ENCODE measurements at regions of chr5 and their contacts with region 1.

Region 1: GRCh38 chr5:91383027-91383955 is at the start of gene ARRDC3:
- DNase-seq: peak; percentile 90 to 99 (median 98)
- ATAC-seq: peak; percentile 32 to 46
- H3K4me3 Mint-ChIP-seq: peak within 1 kb of the TSS; percentile 90 to 100 (median 99)
- H3K27ac Mint-ChIP-seq: peak within 1 kb of the TSS; percentile 92 to 100 (median 99)
- H3K4me1 Mint-ChIP-seq: peaks cover 9 to 26% (median 20%) of the 10 kb centered on the region in 4 donors
- H3K27me3 Mint-ChIP-seq: no peaks in the 10 kb centered on the region
- polyA plus RNA-seq, gene ARRDC3: 72.6 to 134 (median 113) TPM

Region 2: GRCh38 chr5:90474235-90475109 is 908.8 kb before region 1 on chr5 and contains the starts of genes MBLAC2 and POLR3G:
- POLR2A ChIA-PET with region 1: interaction called, 14 read pairs
- DNase-seq: peak; percentile 84 to 96 (median 92)
- ATAC-seq: peak; percentile 84 to 86
- H3K4me3 Mint-ChIP-seq: peak within 1 kb of the TSS; percentile 92 to 99 (median 98)
- H3K27ac Mint-ChIP-seq: peak within 1 kb of the TSS; percentile 94 to 98 (median 96)
- H3K4me1 Mint-ChIP-seq: peaks cover 23 to 39% (median 35%) of the 10 kb centered on the region in 4 donors
- H3K27me3 Mint-ChIP-seq: no peaks in the 10 kb centered on the region
- polyA plus RNA-seq, gene MBLAC2: 4.7 to 5.7 (median 5.3) TPM
- polyA plus RNA-seq, gene POLR3G: 1.9 to 2.8 (median 2.1) TPM

Region 3: DNA sequence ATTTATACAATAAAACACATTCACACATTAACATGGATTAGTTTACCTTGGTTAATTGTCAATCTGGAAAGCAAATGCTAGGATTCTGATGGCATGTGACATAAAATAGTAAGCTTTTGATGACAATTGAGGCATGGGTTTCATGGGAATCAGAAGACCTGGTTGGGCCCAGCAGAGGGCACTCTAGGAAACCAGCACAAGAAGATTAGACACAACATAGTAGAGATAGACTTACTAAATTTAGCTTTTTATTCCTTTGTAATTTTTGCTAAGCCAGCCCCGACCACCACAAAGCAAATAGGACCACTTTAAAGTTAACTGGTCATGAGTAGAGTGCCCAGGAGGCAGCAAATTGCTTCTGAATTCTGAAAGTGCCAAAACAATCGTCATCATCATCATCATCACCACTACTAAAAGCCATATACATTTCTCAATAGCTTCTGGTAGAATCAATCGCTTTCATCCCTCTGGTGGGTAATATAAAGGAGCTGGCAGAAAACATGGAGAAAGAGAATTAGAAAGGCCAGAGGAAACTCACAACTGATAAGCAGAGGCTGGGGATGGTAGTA is 163.4 kb before region 1 on chr5:
- POLR2A ChIA-PET with region 1: interaction called, 31 read pairs
- DNase-seq: peak in 5 of 10 donors; percentile 4 to 63 (median 22)
- ATAC-seq: peak; percentile 44 to 46
- H3K4me3 Mint-ChIP-seq: no peak overlapping the region
- H3K27ac Mint-ChIP-seq: no peak overlapping the region
- H3K4me1 Mint-ChIP-seq: no peaks in the 10 kb centered on the region
- H3K27me3 Mint-ChIP-seq: peaks cover 0 to 2% (median 0%) of the 10 kb centered on the region in 5 donors

Region 4: DNA sequence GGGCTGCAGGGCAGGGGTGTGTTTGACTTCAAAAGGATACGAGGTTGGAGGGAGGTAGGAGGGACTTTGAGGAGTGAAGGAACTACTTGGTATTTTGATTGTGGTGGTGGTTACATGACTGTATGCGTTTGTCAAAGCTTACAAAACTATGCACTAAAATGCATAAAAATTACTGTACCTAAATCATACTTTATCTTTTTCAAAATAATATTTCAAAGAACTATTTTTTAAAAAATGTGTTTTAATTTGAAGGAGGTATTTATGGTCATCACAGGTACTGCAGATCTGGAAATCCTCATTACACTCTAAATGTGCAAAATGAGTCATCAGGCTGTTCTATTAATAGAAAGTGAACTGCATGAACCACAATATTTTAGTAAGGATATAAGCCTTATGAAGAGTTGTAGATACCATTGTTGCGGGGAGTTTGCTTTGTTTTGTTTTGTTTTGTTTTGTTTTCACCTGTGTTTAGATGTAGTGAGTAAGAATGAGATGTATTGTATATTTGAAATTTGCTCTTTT is 117.0 kb before region 1 on chr5:
- POLR2A ChIA-PET with region 1: interaction called, 17 read pairs
- DNase-seq: no peak
- ATAC-seq: no peak
- H3K4me3 Mint-ChIP-seq: no peak overlapping the region
- H3K27ac Mint-ChIP-seq: no peak overlapping the region
- H3K4me1 Mint-ChIP-seq: peaks cover 3 to 25% (median 17%) of the 10 kb centered on the region in 4 donors
- H3K27me3 Mint-ChIP-seq: no peaks in the 10 kb centered on the region

Region 5: DNA sequence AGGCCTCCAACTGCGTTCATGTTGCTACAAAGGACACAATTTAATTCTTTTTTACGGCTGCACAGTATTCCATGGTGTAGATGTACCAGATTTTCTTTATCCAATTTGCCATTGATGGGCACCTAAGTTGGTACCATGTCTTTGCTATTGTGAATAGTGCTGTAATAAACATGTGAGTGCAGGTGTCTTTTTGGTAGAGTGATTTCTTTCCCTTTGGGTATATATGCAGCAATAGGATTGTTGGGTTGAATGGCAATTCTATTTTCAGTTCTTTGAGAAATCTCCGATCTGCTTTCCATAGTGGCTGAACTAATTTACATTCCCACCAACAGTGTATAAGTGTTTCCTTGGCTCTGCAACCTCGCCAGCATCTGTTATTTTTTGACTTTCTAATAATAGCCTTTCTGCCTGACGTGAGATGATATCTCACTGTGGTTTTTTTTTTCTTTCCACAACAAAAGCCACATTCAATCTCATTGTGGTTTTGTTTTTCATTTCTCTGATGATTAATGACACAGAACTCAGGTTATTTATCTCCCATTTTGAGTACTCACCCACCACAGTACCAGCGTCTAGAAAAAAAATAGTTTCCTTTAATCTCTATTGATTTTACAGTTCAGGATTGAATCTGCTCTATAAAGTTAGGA is 22.1 kb before region 1 on chr5:
- POLR2A ChIA-PET with region 1: interaction called, 16 read pairs
- DNase-seq: no peak
- ATAC-seq: peak; percentile 52 to 57
- H3K4me3 Mint-ChIP-seq: peak overlapping the region in 2 of 10 donors; percentile 39 to 40
- H3K27ac Mint-ChIP-seq: peak overlapping the region in 7 of 10 donors; percentile 12 to 71 (median 31)
- H3K4me1 Mint-ChIP-seq: peaks cover 6 to 15% (median 8%) of the 10 kb centered on the region in 4 donors
- H3K27me3 Mint-ChIP-seq: no peaks in the 10 kb centered on the region

Region 6: GRCh38 chr5:91397791-91398190 is 14.5 kb after region 1 on chr5:
- POLR2A ChIA-PET with region 1: no interaction called
- DNase-seq: no peak
- ATAC-seq: no peak
- H3K4me3 Mint-ChIP-seq: no peak overlapping the region
- H3K27ac Mint-ChIP-seq: peak overlapping the region in 1 of 10 donors; percentile 15
- H3K4me1 Mint-ChIP-seq: peaks cover 0 to 8% (median 5%) of the 10 kb centered on the region in 4 donors
- H3K27me3 Mint-ChIP-seq: peaks cover 0 to 4% (median 0%) of the 10 kb centered on the region in 5 donors

Region 7: GRCh38 chr5:91434348-91434747 is 51.1 kb after region 1 on chr5:
- POLR2A ChIA-PET with region 1: interaction called, 19 read pairs
- DNase-seq: peak in 5 of 10 donors; percentile 9 to 65 (median 42)
- ATAC-seq: peak; percentile 95 to 96
- H3K4me3 Mint-ChIP-seq: peak overlapping the region in 9 of 10 donors; percentile 44 to 75 (median 68)
- H3K27ac Mint-ChIP-seq: peak overlapping the region; percentile 69 to 96 (median 94)
- H3K4me1 Mint-ChIP-seq: peaks cover 24 to 58% (median 51%) of the 10 kb centered on the region in 4 donors
- H3K27me3 Mint-ChIP-seq: no peaks in the 10 kb centered on the region